IMR-90 (cell line): ENCODE measurements at regions of chr3 and their contacts with region 1.

Region 1: DNA sequence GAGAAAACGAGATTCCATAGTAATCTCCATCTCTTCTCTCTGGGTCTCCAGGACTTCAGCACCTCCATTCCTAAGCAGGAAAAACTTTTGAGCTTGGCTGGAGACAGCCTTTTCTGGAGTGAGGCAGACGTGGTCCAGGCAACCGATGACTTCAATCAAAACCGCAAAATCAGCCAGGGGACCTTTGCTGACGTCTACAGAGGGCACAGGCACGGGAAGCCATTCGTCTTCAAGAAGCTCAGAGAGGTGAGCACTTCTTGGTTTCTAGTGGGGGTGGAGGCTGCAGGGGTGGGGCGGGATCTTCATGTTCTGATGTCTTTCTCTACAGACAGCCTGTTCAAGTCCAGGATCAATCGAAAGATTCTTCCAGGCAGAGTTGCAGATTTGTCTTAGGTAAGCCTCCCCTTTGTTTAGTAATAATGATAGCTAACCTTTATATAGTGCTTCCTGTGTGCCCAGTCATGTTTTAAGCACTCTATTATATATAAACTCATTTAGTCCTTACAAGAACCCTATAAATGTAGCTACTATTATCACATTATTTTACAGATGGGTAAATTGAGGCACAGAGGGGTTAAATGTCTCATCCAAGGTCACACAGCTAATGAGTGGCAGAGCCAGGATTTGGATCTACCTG is 35.0 kb upstream of the TATDN2 start:
- DNase-seq: peak; percentile 81
- ATAC-seq: no peak
- H3K4me3 ChIP-seq: no peak overlapping the region
- H3K27ac ChIP-seq: peak overlapping the region; percentile 37; the same call in 1 of the 2 replicates
- H3K4me1 ChIP-seq: no peaks in the 10 kb centered on the region
- H3K27me3 ChIP-seq: no peaks in the 10 kb centered on the region
- CTCF ChIP-seq: no peak
- POLR2A ChIP-seq: no peak
- RAD21 ChIP-seq: no peak

Region 2: DNA sequence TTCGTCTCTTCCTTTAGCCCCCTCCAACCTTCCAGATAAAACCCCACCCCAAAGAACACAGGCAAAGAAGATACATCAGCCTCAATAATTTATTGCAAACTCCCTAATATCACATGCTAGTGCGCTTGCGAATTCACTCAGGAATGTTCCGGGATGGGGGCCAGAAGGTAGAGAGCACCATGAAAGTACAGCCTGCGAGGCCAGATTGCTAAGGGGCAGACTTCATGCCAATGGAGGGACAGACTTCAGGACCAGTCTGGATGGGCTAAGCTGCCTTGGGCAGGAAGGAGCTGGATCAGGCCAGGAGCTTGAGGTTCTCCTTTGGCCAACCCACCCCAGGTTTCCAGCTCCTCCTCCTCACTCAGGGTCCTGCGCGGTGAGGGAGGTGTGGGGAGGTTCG is 346.6 kb before region 1 on chr3:
- CTCF ChIA-PET with region 1: no interaction called
- POLR2A ChIA-PET with region 1: interaction called, 14 read pairs
- dilution Hi-C with region 1: no loop called
- in situ Hi-C with region 1: no loop called
- intact Hi-C with region 1: no loop called
- DNase-seq: no peak
- ATAC-seq: no peak
- H3K4me3 ChIP-seq: no peak overlapping the region
- H3K27ac ChIP-seq: no peak overlapping the region
- H3K4me1 ChIP-seq: peaks cover 14% of the 10 kb centered on the region
- H3K27me3 ChIP-seq: no peaks in the 10 kb centered on the region; the same call in 1 of the 2 replicates
- CTCF ChIP-seq: no peak
- POLR2A ChIP-seq: no peak
- RAD21 ChIP-seq: no peak

Region 3: DNA sequence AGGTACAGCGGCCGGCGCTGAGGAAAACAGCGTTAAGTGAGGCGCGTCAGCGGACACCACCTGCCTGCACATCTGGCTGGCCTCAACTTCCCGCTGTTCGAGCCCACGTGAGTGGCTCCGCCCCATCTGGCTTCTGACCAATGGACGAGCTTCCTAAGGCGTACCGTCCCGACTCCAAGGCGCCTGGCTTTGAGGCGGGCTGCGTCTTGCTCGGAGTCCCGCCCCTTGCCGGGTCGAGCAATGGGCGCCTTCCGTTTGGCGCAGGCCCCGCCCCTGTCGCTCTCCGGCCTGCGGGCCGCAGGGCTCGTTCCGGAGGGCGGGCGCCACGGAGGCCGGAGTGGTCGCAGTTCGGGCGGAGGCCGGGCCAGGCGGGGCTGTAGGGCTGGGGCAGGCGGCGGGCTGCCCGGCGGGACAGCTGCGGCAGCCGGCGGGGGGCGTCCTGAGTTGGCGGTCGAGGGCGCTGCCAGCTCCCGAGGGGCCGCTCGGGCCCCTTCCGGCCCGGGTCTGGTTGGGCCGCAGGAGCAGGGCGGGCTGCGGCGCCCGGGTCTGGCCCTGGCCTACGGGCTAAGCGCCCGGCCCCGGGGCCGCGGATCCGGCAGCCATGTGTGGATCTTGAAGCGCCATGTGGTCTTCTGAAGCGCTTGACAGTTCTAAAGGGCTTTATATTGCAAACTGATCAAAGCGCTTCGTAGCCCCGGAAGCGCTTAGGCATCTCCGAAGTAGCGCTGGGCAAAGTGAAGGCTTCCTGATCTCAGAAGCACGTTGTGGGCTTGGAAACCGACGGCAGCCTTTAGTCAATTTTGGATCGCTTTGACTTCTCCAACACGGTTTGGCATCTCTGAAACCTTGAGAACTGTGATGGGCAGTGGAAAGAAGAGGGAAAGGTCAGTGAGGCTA is 35.2 kb after region 1 on chr3 and contains the start of gene TATDN2:
- CTCF ChIA-PET with region 1: no interaction called
- POLR2A ChIA-PET with region 1: no interaction called
- dilution Hi-C with region 1: no loop called
- in situ Hi-C with region 1: no loop called
- intact Hi-C with region 1: no loop called
- DNase-seq: peak; percentile 93
- ATAC-seq: peak; percentile 98
- H3K4me3 ChIP-seq: peak within 1 kb of the TSS; percentile 73
- H3K27ac ChIP-seq: peak within 1 kb of the TSS; percentile 64
- H3K4me1 ChIP-seq: peaks cover 5% of the 10 kb centered on the region; the same call in 1 of the 2 replicates
- H3K27me3 ChIP-seq: no peaks in the 10 kb centered on the region
- CTCF ChIP-seq: no peak
- POLR2A ChIP-seq: peak; percentile 86
- RAD21 ChIP-seq: no peak
- total RNA-seq, gene TATDN2: 7.8 and 9.0 TPM in 2 replicates